ENCODE measurements at regions of chr11 and their contacts with region 1.

Region 1: GRCh38 chr11:14907411-14908213 is 15.6 kb upstream of the CYP2R1 start:
- DNase-seq: peak; percentile 86 to 92
- ATAC-seq: peak; percentile 63 to 80 (median 66)
- H3K4me3 ChIP-seq: no peak overlapping the region
- H3K4me3 Mint-ChIP-seq: no peak overlapping the region
- H3K27ac ChIP-seq: no peak overlapping the region
- H3K27ac Mint-ChIP-seq: peak overlapping the region in 1 of 2 donors; percentile 80
- H3K4me1 ChIP-seq: peaks cover 28% of the 10 kb centered on the region
- H3K4me1 Mint-ChIP-seq: peaks cover 37 to 38% of the 10 kb centered on the region in 2 donors
- H3K27me3 ChIP-seq: no peaks in the 10 kb centered on the region
- H3K27me3 Mint-ChIP-seq: peaks cover 0 to 16% of the 10 kb centered on the region in 2 donors
- CTCF ChIP-seq: peak; percentile 94

Region 2: GRCh38 chr11:14499554-14500180 is 407.9 kb before region 1 on chr11 and contains the start of gene COPB1:
- intact Hi-C with region 1: loop called (anchors 1 kb)
- DNase-seq: peak; percentile 93 to 96
- ATAC-seq: peak; percentile 91 to 98 (median 94)
- H3K4me3 ChIP-seq: peak within 1 kb of the TSS; percentile 94
- H3K4me3 Mint-ChIP-seq: peak within 1 kb of the TSS; percentile 98
- H3K27ac ChIP-seq: peak within 1 kb of the TSS; percentile 89
- H3K27ac Mint-ChIP-seq: peak within 1 kb of the TSS; percentile 96 to 97
- H3K4me1 ChIP-seq: peaks cover 4% of the 10 kb centered on the region
- H3K4me1 Mint-ChIP-seq: peaks cover 36 to 46% of the 10 kb centered on the region in 2 donors
- H3K27me3 ChIP-seq: no peaks in the 10 kb centered on the region
- H3K27me3 Mint-ChIP-seq: no peaks in the 10 kb centered on the region
- CTCF ChIP-seq: no peak
- total RNA-seq, gene COPB1: 77.1 to 83.8 (median 80.4) TPM

Region 3: GRCh38 chr11:14537134-14537599 is 370.4 kb before region 1 on chr11:
- intact Hi-C with region 1: loop called (anchors 1 kb)
- DNase-seq: peak in 1 of 2 donors; percentile 76
- ATAC-seq: peak; percentile 84 to 91 (median 86)
- H3K4me3 ChIP-seq: no peak overlapping the region
- H3K4me3 Mint-ChIP-seq: no peak overlapping the region
- H3K27ac ChIP-seq: no peak overlapping the region
- H3K27ac Mint-ChIP-seq: peak overlapping the region in 1 of 2 donors; percentile 76
- H3K4me1 ChIP-seq: no peaks in the 10 kb centered on the region
- H3K4me1 Mint-ChIP-seq: no peaks in the 10 kb centered on the region
- H3K27me3 ChIP-seq: no peaks in the 10 kb centered on the region
- H3K27me3 Mint-ChIP-seq: no peaks in the 10 kb centered on the region
- CTCF ChIP-seq: peak; percentile 91

Region 4: GRCh38 chr11:14872032-14872431 is 35.6 kb before region 1 on chr11:
- intact Hi-C with region 1: no loop called
- DNase-seq: no peak
- ATAC-seq: no peak
- H3K4me3 ChIP-seq: no peak overlapping the region
- H3K4me3 Mint-ChIP-seq: no peak overlapping the region
- H3K27ac ChIP-seq: no peak overlapping the region
- H3K27ac Mint-ChIP-seq: no peak overlapping the region
- H3K4me1 ChIP-seq: no peaks in the 10 kb centered on the region
- H3K4me1 Mint-ChIP-seq: no peaks in the 10 kb centered on the region
- H3K27me3 ChIP-seq: no peaks in the 10 kb centered on the region
- H3K27me3 Mint-ChIP-seq: no peaks in the 10 kb centered on the region
- CTCF ChIP-seq: no peak

Region 5: DNA sequence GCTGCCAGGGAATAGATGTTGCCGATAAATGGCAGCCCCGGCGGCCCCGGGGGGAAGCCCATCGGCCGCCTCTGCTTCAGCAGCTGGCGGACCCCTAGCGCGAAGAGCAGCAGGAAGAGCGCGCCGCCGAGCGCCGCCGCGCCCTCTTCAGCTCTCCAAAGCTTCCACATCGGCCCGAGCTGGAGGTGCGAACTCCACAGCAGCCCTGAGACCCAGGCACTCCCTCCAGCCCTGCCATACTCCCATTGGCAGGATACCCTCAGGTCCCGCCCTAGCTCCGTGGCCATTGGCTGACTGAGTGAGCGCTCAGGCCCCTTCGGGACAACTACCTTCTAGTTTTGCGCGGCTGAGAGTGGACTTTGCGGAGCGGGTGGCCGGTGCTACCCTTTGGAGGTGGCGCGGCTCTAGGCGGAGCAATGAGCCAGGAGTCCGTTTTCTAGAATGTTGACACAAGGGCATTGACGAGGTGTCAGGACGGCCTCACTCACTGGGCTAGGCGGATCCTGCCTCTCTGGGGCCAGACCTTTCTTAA is 15.5 kb before region 1 on chr11 and contains the start of gene CYP2R1:
- intact Hi-C with region 1: loop called (anchors 1 kb)
- DNase-seq: peak; percentile 90 to 94
- ATAC-seq: peak; percentile 79 to 94 (median 86)
- H3K4me3 ChIP-seq: peak within 1 kb of the TSS; percentile 87
- H3K4me3 Mint-ChIP-seq: peak within 1 kb of the TSS; percentile 96
- H3K27ac ChIP-seq: peak within 1 kb of the TSS; percentile 92
- H3K27ac Mint-ChIP-seq: peak within 1 kb of the TSS; percentile 95 to 98
- H3K4me1 ChIP-seq: peaks cover 11% of the 10 kb centered on the region
- H3K4me1 Mint-ChIP-seq: peaks cover 22 to 40% of the 10 kb centered on the region in 2 donors
- H3K27me3 ChIP-seq: no peaks in the 10 kb centered on the region
- H3K27me3 Mint-ChIP-seq: no peaks in the 10 kb centered on the region
- CTCF ChIP-seq: no peak
- total RNA-seq, gene CYP2R1: 14.9 to 20.3 (median 16.2) TPM

Region 6: GRCh38 chr11:15074206-15075161 is 166.9 kb after region 1 on chr11:
- intact Hi-C with region 1: loop called (anchors 1 kb)
- DNase-seq: peak; percentile 71 to 84
- ATAC-seq: peak; percentile 81 to 88 (median 88)
- H3K4me3 ChIP-seq: peak overlapping the region; percentile 9
- H3K4me3 Mint-ChIP-seq: peak overlapping the region; percentile 60
- H3K27ac ChIP-seq: no peak overlapping the region
- H3K27ac Mint-ChIP-seq: no peak overlapping the region
- H3K4me1 ChIP-seq: peaks cover 20% of the 10 kb centered on the region
- H3K4me1 Mint-ChIP-seq: peaks cover 18 to 19% of the 10 kb centered on the region in 2 donors
- H3K27me3 ChIP-seq: peaks cover 17% of the 10 kb centered on the region
- H3K27me3 Mint-ChIP-seq: peaks cover 48 to 75% of the 10 kb centered on the region in 2 donors
- CTCF ChIP-seq: peak; percentile 71

Region 7: GRCh38 chr11:15113381-15113780 is 205.8 kb after region 1 on chr11:
- intact Hi-C with region 1: no loop called
- DNase-seq: peak in 1 of 2 donors; percentile 7
- ATAC-seq: peak; percentile 49 to 79 (median 73)
- H3K4me3 ChIP-seq: no peak overlapping the region
- H3K4me3 Mint-ChIP-seq: peak overlapping the region; percentile 70
- H3K27ac ChIP-seq: no peak overlapping the region
- H3K27ac Mint-ChIP-seq: peak overlapping the region in 1 of 2 donors; percentile 11
- H3K4me1 ChIP-seq: peaks cover 33% of the 10 kb centered on the region
- H3K4me1 Mint-ChIP-seq: peaks cover 21 to 23% of the 10 kb centered on the region in 2 donors
- H3K27me3 ChIP-seq: peaks cover 8% of the 10 kb centered on the region
- H3K27me3 Mint-ChIP-seq: peaks cover 21 to 25% of the 10 kb centered on the region in 2 donors
- CTCF ChIP-seq: no peak

Region 8: GRCh38 chr11:15396778-15397177 is 489.2 kb after region 1 on chr11:
- intact Hi-C with region 1: no loop called
- DNase-seq: no peak
- ATAC-seq: no peak
- H3K4me3 ChIP-seq: no peak overlapping the region
- H3K4me3 Mint-ChIP-seq: no peak overlapping the region
- H3K27ac ChIP-seq: no peak overlapping the region
- H3K27ac Mint-ChIP-seq: no peak overlapping the region
- H3K4me1 ChIP-seq: no peaks in the 10 kb centered on the region
- H3K4me1 Mint-ChIP-seq: no peaks in the 10 kb centered on the region
- H3K27me3 ChIP-seq: no peaks in the 10 kb centered on the region
- H3K27me3 Mint-ChIP-seq: no peaks in the 10 kb centered on the region
- CTCF ChIP-seq: no peak